ENCODE measurements at regions of chr3 and their contacts with region 1.

Region 1: DNA sequence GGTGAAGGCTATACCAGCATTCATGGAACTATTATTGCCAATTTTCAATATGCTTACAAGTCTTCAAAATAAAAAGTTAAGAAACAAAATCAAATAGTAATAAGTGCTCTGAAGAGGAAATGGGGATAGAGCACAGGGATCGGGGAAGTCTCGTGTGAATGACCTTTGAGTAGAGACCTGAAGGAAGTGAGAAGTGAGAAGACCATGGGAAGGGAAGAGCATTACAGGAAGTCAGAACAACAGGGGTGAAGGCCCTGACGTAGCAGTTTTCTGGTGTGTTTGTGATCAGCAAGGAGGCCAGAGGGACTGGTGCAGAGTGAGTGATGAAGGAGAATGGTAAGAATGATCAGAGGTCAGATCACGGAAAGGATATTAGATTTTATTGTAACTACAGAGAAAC is 48.1 kb downstream of the STAC start:
- DNase-seq: no peak
- ATAC-seq: no peak

Region 2: DNA sequence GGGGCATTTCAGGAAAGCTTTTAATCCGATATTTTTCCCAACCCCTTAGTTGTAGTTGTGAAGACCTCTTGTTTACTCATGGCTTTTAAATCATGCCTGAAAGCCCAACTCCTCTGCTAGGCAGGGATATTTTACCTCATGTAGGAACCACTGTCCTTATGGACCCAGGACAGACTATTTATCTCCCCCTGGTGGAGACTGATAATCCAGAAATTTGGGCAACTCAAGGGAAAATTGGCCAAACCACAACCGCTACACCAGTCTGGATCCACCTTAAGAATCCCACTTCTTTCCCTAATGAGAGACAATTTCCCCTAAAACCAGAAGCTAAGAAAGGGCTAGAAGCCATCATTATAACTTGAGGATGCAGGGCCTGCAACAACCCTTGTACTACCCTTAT is 296.2 kb before region 1 on chr3:
- intact Hi-C with region 1: no loop called
- DNase-seq: no peak
- ATAC-seq: no peak

Region 3: DNA sequence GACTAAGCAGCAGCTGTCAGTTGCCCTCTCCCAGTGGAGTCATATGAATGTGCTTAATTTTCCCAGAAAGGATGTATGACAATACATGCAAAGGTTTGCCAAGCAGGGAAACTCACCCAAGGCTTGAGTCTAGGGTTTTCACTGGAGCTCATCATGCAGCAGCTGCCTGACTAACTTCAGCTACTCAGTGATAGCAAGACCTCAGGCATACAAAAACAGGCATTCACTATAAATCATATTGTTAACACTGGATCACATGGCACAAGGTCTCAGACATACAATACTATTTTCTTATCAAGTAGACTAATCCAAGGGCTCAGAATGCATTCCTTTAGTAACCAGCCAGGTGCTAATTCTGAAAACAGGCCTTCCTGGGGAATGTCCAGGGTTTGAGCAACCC is 133.1 kb before region 1 on chr3:
- intact Hi-C with region 1: no loop called
- DNase-seq: no peak
- ATAC-seq: no peak

Region 4: GRCh38 chr3:36444909-36445308 is 16.5 kb after region 1 on chr3:
- intact Hi-C with region 1: loop called (anchors 1 kb)
- DNase-seq: no peak
- ATAC-seq: no peak